ENCODE measurements at regions of chr9 and their contacts with region 1.

Region 1: DNA sequence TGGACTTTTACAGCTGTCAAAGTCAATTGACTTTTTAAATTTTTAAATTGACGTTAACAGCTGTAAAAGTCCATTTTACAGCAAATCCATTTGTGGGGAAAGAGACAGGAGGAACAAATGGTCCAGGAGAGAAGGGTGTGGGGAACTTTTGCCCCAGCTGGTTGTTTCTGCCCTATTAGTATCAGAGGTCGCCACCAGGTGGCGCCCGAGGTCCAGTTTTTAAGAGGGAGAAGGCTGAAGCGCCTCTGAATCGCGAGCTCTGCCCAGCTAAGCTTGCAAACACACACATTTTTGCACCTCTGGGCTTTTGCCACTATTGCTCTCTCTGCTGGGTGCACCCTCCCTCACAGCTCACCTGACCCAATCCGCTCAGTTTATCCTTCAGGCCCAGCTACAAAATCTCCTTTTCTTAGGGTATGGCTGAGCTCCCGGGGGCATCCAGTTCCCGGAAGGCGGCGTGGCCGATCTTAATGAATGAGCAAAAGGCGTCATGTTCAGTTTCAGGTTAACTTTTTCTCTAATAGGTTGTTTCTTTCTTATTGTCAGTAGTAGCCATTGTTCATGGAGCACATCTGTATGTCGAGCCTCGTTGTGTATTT is 6.3 kb upstream of the TTLL11 start:
- DNase-seq: peak; percentile 85 to 92
- ATAC-seq: peak; percentile 83 to 94 (median 86)
- H3K4me3 ChIP-seq: peak overlapping the region; percentile 39
- H3K27ac ChIP-seq: no peak overlapping the region
- H3K4me1 ChIP-seq: peaks cover 9% of the 10 kb centered on the region
- H3K27me3 ChIP-seq: no peaks in the 10 kb centered on the region
- CTCF ChIP-seq: peak; percentile 84

Region 2: GRCh38 chr9:122144836-122145591 is 45.6 kb after region 1 on chr9:
- intact Hi-C with region 1: no loop called
- DNase-seq: no peak
- ATAC-seq: no peak
- H3K4me3 ChIP-seq: no peak overlapping the region
- H3K27ac ChIP-seq: no peak overlapping the region
- H3K4me1 ChIP-seq: peaks cover 3% of the 10 kb centered on the region
- H3K27me3 ChIP-seq: no peaks in the 10 kb centered on the region
- CTCF ChIP-seq: no peak

Region 3: GRCh38 chr9:122810306-122810946 is 711.1 kb after region 1 on chr9:
- intact Hi-C with region 1: loop called (anchors 5 kb)
- DNase-seq: peak; percentile 63 to 81
- ATAC-seq: peak; percentile 84 to 98 (median 90)
- H3K4me3 ChIP-seq: no peak overlapping the region
- H3K27ac ChIP-seq: no peak overlapping the region
- H3K4me1 ChIP-seq: no peaks in the 10 kb centered on the region
- H3K27me3 ChIP-seq: no peaks in the 10 kb centered on the region
- CTCF ChIP-seq: peak; percentile 80